PC-9 (cell line): ENCODE measurements at regions of chr2 and their contacts with region 1.

Region 1: DNA sequence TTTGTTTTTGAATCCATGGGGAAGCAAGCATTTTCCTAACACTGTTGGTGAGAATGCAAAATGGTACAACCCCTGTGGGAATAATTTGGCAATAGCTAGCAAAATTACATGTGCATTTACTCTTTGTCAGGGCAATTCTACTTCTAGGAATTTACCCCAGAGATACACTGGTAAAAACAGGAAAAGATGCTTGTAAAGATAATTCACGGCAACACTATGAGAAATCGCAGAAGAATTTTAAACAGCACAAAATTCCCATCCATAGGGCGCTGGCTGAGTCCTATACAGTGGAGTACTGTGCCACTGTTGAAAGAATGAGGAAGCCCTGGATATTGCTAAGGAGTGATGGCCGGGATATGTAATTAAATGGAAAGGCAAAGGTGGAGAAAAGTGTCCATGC is 75.8 kb downstream of the DGKD start:
- DNase-seq: peak; percentile 75 to 99
- H3K4me3 ChIP-seq: no peak overlapping the region
- H3K27ac ChIP-seq: peak overlapping the region; percentile 77
- H3K4me1 ChIP-seq: peaks cover 40% of the 10 kb centered on the region
- H3K27me3 ChIP-seq: no peaks in the 10 kb centered on the region
- CTCF ChIP-seq: no peak

Region 2: DNA sequence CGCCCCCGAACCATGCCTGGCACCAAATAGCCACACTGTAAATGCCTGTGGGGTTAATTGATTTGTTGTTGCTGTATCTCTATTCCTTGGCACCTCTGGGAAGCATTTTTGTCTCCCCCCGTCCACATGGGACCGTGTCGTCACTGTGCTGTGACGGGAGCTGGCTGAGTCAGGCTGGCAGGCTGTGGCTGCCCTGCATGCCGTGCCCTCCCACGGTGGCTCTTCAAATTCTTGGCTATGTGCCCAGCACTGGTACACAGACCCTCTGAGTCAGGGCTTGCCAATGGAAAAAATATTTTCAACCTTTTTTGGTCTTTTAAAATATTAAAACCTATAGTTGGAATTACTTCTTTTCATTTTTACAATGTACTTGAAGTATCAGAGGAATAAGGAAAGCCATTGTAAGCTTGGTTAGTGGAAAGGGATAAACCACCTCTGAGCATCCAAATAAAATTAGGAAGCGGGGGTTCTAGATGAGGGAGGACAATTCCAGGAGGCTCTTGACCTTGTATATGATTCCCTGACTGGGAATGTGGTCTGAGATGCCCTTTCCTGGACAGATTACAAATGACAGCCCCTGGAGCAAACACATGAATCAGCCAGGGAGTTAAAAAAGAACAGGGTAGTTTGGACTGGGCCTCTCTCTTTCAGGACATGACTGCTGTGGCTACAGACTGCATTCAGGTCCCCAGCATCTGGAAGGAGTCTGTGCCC is 16.4 kb before region 1 on chr2:
- CTCF ChIA-PET with region 1: interaction called, 3 read pairs
- POLR2A ChIA-PET with region 1: interaction called, 4 read pairs
- intact Hi-C with region 1: loop called (anchors 1 kb)
- DNase-seq: peak; percentile 93
- H3K4me3 ChIP-seq: peak overlapping the region; percentile 18; the same call in 1 of the 2 replicates
- H3K27ac ChIP-seq: peak overlapping the region; percentile 88
- H3K4me1 ChIP-seq: peaks cover 38% of the 10 kb centered on the region
- H3K27me3 ChIP-seq: no peaks in the 10 kb centered on the region
- CTCF ChIP-seq: no peak

Region 3: DNA sequence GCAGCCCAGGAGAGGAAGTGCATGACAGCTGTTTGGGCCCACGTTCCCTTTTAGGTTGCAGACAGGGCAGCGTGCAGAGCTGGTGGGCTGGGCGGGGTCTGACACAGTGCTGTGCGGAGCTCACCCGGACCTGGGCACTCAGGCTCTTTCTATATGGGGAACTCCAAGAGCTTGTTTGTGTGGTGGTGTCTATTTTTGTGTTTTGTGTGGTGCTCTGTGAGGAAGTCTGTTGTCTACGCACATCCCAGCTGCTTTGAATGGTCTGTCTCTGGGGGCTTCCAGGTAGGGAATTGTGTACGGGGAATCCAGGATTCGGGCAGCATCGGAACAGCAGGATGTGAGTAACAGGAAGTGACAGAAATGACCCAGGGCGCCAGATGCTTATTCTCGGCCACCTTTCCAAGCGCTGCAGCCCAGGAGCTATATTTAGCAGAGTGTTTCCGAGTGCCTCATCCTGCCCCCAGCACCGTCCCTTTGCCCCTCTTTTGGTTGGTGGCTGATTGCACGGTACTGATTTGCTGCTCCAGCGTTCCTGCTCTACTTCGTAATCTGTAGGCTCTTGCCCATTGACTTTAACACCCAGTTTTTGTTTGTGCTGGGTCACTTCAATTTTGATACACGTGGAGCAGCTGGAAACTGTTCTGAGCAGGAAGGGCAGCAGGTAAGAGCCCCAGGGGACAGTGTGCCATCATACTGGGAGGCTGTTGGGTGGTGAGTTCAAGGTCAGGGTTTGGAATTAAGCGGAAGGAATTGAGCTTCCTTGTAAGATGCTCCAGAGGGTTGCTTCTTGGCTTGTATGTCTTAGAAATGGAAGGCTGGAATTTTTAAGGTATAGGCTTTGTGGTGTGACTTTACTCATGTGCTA is 11.1 kb before region 1 on chr2:
- CTCF ChIA-PET with region 1: interaction called, 3 read pairs
- POLR2A ChIA-PET with region 1: interaction called, 4 read pairs
- intact Hi-C with region 1: loop called (anchors 1 kb)
- DNase-seq: no peak
- H3K4me3 ChIP-seq: no peak overlapping the region
- H3K27ac ChIP-seq: no peak overlapping the region
- H3K4me1 ChIP-seq: peaks cover 57% of the 10 kb centered on the region
- H3K27me3 ChIP-seq: no peaks in the 10 kb centered on the region
- CTCF ChIP-seq: no peak

Region 4: GRCh38 chr2:233519787-233520611 is 89.9 kb after region 1 on chr2:
- CTCF ChIA-PET with region 1: no interaction called
- POLR2A ChIA-PET with region 1: no interaction called
- intact Hi-C with region 1: no loop called
- DNase-seq: no peak
- H3K4me3 ChIP-seq: no peak overlapping the region
- H3K27ac ChIP-seq: no peak overlapping the region
- H3K4me1 ChIP-seq: no peaks in the 10 kb centered on the region
- H3K27me3 ChIP-seq: no peaks in the 10 kb centered on the region
- CTCF ChIP-seq: no peak